ENCODE measurements at regions of chr2 and their contacts with region 1.

Region 1: DNA sequence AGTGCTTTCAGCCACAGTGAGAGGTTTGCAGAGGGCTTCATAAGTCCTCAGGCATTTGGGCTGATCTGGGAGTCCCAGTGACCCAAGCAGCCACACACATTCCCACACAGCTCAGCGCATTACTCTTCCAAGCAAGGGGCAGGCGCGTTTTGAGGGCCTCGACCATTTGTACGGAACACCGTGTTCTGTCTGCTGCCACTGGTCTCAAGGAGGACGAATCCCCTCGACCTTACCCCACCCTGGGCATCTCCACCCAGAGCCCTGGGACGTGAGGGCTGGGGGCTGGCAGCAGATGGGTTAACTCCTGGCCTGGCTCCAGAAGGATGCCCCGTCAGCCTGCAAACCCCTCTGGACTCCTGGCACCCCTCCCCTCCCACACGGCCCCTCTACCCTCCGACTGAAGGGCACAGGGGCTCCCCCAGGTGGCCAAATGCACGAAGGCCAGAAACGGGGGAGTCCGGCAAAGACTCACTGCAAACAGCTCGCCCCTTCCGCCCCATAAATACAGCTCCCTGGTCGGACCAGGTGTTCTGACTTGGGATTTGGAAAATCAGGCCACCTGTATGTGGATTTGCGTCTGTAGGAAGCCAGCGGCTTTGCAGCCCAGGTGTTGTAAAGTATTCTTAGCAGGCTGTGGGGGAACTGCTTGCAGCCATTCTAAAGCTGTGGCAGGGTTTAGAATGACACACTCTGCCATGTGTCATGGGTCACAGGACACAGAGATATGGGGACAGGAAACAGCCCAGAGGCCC is 33.6 kb upstream of the PTMA start:
- DNase-seq: peak; percentile 99
- H3K4me3 ChIP-seq: peak overlapping the region; percentile 78
- H3K27ac ChIP-seq: peak overlapping the region; percentile 99
- H3K4me1 ChIP-seq: peaks cover 84% of the 10 kb centered on the region
- CTCF ChIP-seq: peak; percentile 94

Region 2: GRCh38 chr2:230557065-230557464 is 1117.7 kb before region 1 on chr2:
- CTCF ChIA-PET with region 1: no interaction called
- POLR2A ChIA-PET with region 1: no interaction called
- intact Hi-C with region 1: no loop called
- DNase-seq: no peak
- H3K4me3 ChIP-seq: no peak overlapping the region
- H3K27ac ChIP-seq: no peak overlapping the region
- H3K4me1 ChIP-seq: peaks cover 6% of the 10 kb centered on the region
- CTCF ChIP-seq: no peak

Region 3: GRCh38 chr2:230842473-230842872 is 832.3 kb before region 1 on chr2:
- CTCF ChIA-PET with region 1: no interaction called
- POLR2A ChIA-PET with region 1: no interaction called
- intact Hi-C with region 1: no loop called
- DNase-seq: no peak
- H3K4me3 ChIP-seq: no peak overlapping the region
- H3K27ac ChIP-seq: no peak overlapping the region
- H3K4me1 ChIP-seq: no peaks in the 10 kb centered on the region
- CTCF ChIP-seq: no peak

Region 4: DNA sequence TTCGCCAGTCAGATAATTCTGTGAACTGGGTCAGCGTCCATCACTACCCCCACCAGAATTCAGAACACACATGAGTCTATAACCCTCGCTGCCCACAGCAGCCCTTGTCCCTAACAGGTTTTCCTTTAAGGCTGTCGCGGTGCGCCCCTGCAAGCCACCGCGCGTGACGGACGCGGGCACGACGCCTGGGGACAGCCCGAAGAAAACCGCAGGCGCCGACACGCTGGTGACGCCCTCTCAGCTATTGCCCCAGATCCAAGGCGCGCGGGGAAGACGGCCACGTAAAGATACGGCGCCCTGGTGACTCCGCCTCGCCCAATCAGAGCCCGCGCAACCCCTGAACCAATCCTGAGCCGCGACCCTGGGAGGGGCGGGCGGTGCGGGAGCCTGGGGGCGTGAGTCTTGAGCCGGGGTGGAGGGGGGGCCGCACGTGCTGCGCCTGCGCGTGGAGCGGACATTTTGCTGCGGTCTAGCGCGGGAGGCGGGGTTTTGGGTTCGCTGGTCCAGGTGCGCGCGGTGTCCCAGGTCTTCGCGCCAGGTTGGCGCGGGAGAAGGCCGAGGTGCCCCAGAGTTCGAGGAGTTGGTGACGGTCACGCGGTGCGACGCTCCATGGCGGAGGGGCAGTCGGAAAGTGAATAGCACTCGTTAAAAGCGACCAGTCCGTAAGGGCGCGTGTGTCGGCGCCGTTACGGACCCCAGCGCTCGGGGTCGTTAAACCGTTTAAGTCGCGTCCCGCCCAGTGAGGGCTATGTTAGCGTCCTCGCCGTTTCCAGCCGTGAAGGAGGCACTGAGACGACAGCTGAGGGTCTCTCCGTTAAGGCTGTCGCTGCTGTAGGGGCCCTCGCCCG is 160.4 kb before region 1 on chr2:
- CTCF ChIA-PET with region 1: no interaction called
- POLR2A ChIA-PET with region 1: no interaction called
- intact Hi-C with region 1: loop called (anchors 5 kb)
- DNase-seq: peak; percentile 97
- H3K4me3 ChIP-seq: peak overlapping the region; percentile 76
- H3K27ac ChIP-seq: peak overlapping the region; percentile 49
- H3K4me1 ChIP-seq: peaks cover 23% of the 10 kb centered on the region
- CTCF ChIP-seq: no peak

Region 5: GRCh38 chr2:231648587-231649174 is 26.1 kb before region 1 on chr2:
- CTCF ChIA-PET with region 1: interaction called, 7 read pairs
- POLR2A ChIA-PET with region 1: interaction called, 35 read pairs
- intact Hi-C with region 1: loop called (anchors 1 kb)
- DNase-seq: peak; percentile 81
- H3K4me3 ChIP-seq: no peak overlapping the region
- H3K27ac ChIP-seq: no peak overlapping the region
- H3K4me1 ChIP-seq: peaks cover 26% of the 10 kb centered on the region
- CTCF ChIP-seq: peak; percentile 81

Region 6: DNA sequence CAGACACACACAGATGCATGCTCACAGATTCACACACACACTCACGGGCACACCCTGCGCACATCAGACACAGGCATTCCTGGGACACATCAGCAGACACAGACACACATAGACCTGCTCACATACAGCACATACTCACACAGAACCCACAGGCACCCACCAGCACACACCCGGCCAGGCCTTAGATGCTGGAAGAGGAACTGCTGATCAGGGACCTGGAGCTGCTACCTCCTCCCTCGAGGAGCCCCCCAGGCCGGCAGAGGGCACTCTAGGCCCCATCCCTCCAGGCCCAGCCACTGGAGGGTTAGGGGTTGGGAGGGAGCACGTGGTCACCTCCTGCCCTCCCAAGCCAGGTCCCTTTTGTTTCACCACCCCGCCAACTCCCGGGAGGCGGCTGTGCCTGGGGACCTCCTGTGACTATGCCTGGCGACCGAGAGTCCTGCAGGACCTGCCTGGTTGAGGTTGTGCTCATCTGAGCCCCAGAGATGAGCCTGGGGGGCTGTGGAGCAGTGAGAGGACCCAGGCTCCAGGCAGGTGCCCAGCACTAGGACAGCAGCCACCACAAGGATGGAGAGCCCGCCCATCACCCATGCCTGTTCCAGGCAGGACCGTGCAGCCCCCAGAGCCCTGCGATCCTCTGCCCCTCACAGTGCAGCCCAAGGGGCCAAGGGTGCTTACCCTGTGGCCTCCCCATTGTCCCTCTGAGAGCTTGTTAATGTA is 12.5 kb after region 1 on chr2:
- CTCF ChIA-PET with region 1: interaction called, 15 read pairs
- POLR2A ChIA-PET with region 1: interaction called, 102 read pairs
- intact Hi-C with region 1: no loop called
- DNase-seq: peak; percentile 92
- H3K4me3 ChIP-seq: peak overlapping the region; percentile 68
- H3K27ac ChIP-seq: peak overlapping the region; percentile 71
- H3K4me1 ChIP-seq: peaks cover 79% of the 10 kb centered on the region
- CTCF ChIP-seq: peak; percentile 86

Region 7: DNA sequence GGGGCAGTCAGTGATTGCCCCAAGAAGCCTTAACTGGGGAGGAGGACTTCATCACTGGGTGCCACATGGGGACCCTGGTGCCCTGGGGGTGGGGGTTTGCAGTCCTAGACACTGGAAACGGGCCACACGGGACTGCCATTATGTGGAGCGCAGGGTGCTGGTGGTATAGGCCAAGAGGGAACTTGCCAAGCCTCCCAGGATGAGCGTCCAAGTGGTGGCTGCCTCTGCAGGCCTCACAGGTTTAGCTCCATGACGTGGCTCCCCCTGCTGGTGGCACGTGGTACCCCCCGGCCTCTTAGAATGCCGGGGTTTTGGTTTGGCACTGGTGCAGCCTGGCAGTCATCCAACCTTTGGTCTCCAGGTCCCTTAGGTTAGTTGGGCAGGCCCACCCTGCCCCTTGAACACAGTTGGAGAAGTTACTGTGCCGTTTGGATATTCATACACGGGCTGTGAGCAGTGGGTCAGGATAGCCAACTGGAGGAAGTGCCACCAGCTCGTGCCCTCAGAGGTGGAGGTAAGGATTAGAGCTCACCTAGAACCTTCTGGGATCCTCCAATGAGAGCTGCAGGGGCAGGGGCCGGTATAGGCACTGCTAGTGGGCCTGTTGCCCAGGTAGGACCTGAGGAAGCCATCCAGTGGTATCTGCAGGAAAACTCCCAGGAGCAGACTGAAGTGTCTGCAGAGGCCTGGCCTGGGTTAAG is 39.1 kb after region 1 on chr2:
- CTCF ChIA-PET with region 1: interaction called, 49 read pairs
- POLR2A ChIA-PET with region 1: interaction called, 29 read pairs
- intact Hi-C with region 1: loop called (anchors 1 kb)
- DNase-seq: peak; percentile 91
- H3K4me3 ChIP-seq: peak overlapping the region; percentile 18
- H3K27ac ChIP-seq: peak overlapping the region; percentile 68
- H3K4me1 ChIP-seq: peaks cover 63% of the 10 kb centered on the region
- CTCF ChIP-seq: peak; percentile 94